MCF 10A (cell line): ENCODE measurements at regions of chr12 and their contacts with region 1.

Region 1: GRCh38 chr12:102740141-102740955 is 176.7 kb downstream of the PAH start:
- DNase-seq: peak; percentile 47
- H3K4me3 Mint-ChIP-seq: no peak overlapping the region
- H3K27ac Mint-ChIP-seq: no peak overlapping the region
- H3K4me1 Mint-ChIP-seq: no peaks in the 10 kb centered on the region
- H3K27me3 Mint-ChIP-seq: no peaks in the 10 kb centered on the region
- CTCF ChIP-seq: peak; percentile 30

Region 2: GRCh38 chr12:101919447-101919846 is 820.9 kb before region 1 on chr12:
- CTCF ChIA-PET with region 1: interaction called, 10 read pairs
- POLR2A ChIA-PET with region 1: no interaction called
- intact Hi-C with region 1: loop called (anchors 1 kb)
- DNase-seq: no peak
- H3K4me3 Mint-ChIP-seq: no peak overlapping the region
- H3K27ac Mint-ChIP-seq: no peak overlapping the region
- H3K4me1 Mint-ChIP-seq: peaks cover 17% of the 10 kb centered on the region
- H3K27me3 Mint-ChIP-seq: no peaks in the 10 kb centered on the region
- CTCF ChIP-seq: no peak

Region 3: DNA sequence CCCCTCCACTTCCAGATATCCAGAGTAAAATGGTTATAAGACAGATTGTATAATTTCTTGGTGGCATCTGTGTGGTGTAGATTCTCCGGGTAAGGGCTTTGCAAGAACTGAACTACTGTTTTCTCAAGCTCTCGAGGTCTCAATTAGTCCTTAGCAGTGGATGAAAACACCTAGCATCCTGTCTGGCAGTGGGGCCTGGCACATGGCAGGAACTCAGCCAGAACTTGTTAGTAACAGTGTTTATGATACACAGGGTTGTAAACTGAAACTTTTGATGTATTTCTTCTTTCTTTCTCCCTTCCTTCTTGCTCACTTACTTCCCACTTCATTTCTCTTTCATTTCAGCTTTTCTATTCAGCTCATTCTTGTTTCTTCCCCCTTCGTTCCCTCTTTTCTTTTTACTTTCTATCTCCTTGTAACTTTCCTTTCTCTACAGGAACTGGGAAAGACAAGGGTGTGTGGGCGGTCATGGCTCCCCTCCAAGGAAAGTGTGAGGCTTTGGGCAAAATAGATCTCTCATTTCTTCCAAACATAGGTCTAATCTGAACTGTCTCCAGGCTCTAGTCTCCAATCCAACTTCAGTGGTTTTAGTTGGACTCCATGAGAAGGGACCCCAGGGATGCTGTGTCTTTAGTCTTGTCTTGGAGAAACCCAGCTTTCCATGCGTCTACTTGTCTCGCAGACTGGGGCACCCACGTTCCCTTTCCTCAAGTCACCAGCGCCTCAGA is 17.0 kb after region 1 on chr12:
- CTCF ChIA-PET with region 1: interaction called, 10 read pairs
- POLR2A ChIA-PET with region 1: no interaction called
- intact Hi-C with region 1: no loop called
- DNase-seq: peak; percentile 23
- H3K4me3 Mint-ChIP-seq: no peak overlapping the region
- H3K27ac Mint-ChIP-seq: peak overlapping the region; percentile 33
- H3K4me1 Mint-ChIP-seq: peaks cover 7% of the 10 kb centered on the region
- H3K27me3 Mint-ChIP-seq: no peaks in the 10 kb centered on the region
- CTCF ChIP-seq: no peak